Calu3 (cell line): ENCODE measurements at regions of chr12 and their contacts with region 1.

Region 1: GRCh38 chr12:15151161-15152120 is 69.8 kb downstream of the RERG start:
- DNase-seq: peak; percentile 49
- H3K4me3 Mint-ChIP-seq: no peak overlapping the region
- H3K27ac Mint-ChIP-seq: no peak overlapping the region
- H3K4me1 Mint-ChIP-seq: peaks cover 34% of the 10 kb centered on the region
- H3K27me3 Mint-ChIP-seq: no peaks in the 10 kb centered on the region
- CTCF ChIP-seq: peak; percentile 44

Region 2: GRCh38 chr12:14810953-14811483 is 340.4 kb before region 1 on chr12:
- CTCF ChIA-PET with region 1: no interaction called
- intact Hi-C with region 1: loop called (anchors 10 kb)
- DNase-seq: peak; percentile 57
- H3K4me3 Mint-ChIP-seq: no peak overlapping the region
- H3K27ac Mint-ChIP-seq: no peak overlapping the region
- H3K4me1 Mint-ChIP-seq: peaks cover 9% of the 10 kb centered on the region
- H3K27me3 Mint-ChIP-seq: no peaks in the 10 kb centered on the region
- CTCF ChIP-seq: peak; percentile 51

Region 3: DNA sequence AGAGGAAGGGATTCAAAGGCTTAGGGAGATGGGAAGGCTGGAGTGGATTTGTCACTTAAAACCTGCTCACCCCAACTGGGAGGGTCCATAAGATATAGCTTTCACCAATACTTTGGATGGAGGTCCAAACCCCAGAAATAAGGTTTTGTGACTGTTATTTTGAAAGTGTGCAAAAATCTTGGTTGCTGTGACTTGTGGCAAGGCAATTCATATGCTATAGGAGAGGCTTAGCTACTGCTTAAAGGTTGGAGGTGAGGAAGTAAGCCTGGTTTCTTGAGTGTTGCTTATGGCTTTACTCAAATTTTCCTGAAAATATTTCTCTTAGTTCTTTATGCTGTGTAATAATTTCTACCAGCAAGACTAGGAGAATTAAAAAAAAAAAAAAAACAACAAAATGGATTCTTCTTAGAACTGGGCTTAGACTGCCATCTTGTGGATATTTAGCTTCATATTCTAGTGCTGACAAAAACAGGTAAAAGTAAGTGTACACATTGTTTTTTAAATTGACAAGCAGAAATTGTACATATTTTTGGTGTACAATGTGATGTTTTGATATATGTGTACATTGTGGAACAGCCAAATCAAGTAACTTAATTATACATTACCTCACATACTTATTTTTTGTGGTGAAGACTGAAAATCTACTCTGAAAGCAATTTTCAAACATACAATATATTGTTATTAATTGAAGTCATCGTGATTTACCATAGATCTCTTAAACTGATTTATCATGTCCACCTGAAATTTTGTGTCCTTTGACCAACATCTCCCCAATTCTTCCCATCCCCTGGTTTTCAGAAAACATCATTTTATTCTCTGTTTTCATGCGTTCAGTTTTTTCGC is 155.6 kb before region 1 on chr12:
- CTCF ChIA-PET with region 1: no interaction called
- intact Hi-C with region 1: loop called (anchors 5 kb)
- DNase-seq: no peak
- H3K4me3 Mint-ChIP-seq: no peak overlapping the region
- H3K27ac Mint-ChIP-seq: no peak overlapping the region
- H3K4me1 Mint-ChIP-seq: peaks cover 28% of the 10 kb centered on the region
- H3K27me3 Mint-ChIP-seq: no peaks in the 10 kb centered on the region
- CTCF ChIP-seq: peak; percentile 50

Region 4: DNA sequence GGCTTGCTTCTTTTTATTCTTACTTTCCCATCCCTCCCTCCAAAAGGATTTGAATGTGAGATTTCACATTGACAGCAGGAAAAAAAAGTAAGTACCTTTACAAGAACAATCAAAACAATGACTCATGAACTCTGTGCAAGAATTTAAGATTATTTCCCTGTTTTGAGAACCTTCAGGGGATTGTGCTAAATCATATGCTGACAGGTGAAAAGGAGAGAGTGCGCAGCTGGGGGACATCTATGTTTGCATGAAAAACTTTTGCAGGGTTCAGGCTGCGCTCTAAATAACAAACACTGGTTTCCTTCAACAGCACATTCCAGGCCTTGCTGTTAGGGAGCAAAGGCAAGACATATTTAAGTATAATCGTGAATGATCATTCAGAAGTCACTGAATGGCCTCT is 42.5 kb after region 1 on chr12:
- CTCF ChIA-PET with region 1: no interaction called
- intact Hi-C with region 1: no loop called
- DNase-seq: no peak
- H3K4me3 Mint-ChIP-seq: no peak overlapping the region
- H3K27ac Mint-ChIP-seq: no peak overlapping the region
- H3K4me1 Mint-ChIP-seq: peaks cover 18% of the 10 kb centered on the region
- H3K27me3 Mint-ChIP-seq: no peaks in the 10 kb centered on the region
- CTCF ChIP-seq: no peak

Region 5: GRCh38 chr12:15220994-15221885 is 69.8 kb after region 1 on chr12 and contains the start of gene RERG:
- CTCF ChIA-PET with region 1: interaction called, 45 read pairs
- intact Hi-C with region 1: loop called (anchors 1 kb)
- DNase-seq: peak; percentile 92
- H3K4me3 Mint-ChIP-seq: peak within 1 kb of the TSS; percentile 79
- H3K27ac Mint-ChIP-seq: peak within 1 kb of the TSS; percentile 29
- H3K4me1 Mint-ChIP-seq: peaks cover 12% of the 10 kb centered on the region
- H3K27me3 Mint-ChIP-seq: no peaks in the 10 kb centered on the region
- CTCF ChIP-seq: peak; percentile 94
- total RNA-seq, gene RERG: 6.0 and 8.9 TPM in 2 replicates

Region 6: DNA sequence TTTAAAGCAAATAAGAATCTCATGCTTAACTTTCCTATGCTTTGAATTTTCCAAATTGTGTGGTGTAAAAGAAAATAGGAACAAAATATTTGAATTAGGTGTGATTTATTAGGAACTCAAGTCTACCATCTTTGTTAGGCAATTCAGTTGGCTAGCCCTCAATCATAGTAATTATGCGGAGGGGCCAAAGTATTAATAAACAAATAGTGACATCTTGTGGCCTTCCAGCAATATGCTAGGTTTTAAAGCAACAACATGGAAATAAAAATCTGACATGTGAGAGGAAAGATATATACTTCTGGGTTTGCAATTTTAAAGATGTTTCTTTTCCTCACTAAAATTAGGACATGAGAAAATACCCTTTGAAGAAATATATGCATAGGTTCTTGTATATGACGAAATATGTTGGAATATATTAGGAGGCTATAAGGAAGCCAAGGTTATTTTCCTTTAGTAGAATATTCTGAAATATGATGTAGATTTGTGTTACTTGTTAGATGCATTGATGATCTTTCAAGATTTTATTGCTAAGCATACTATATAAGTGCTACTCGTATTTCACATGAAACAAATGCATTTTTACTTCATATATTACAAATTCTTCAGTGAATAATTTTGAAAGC is 371.2 kb after region 1 on chr12:
- CTCF ChIA-PET with region 1: no interaction called
- intact Hi-C with region 1: loop called (anchors 5 kb)
- DNase-seq: peak; percentile 21
- H3K4me3 Mint-ChIP-seq: no peak overlapping the region
- H3K27ac Mint-ChIP-seq: no peak overlapping the region
- H3K4me1 Mint-ChIP-seq: peaks cover 19% of the 10 kb centered on the region
- H3K27me3 Mint-ChIP-seq: peaks cover 20% of the 10 kb centered on the region
- CTCF ChIP-seq: peak; percentile 40